Motor neuron (in vitro differentiated cells): ENCODE measurements at regions of chr11 and their contacts with region 1.

Region 1: GRCh38 chr11:66694732-66695207 is 17.1 kb upstream of the RBM4B start:
- ATAC-seq: peak; percentile 94 to 99 (median 98)
- H3K4me3 ChIP-seq: no peak overlapping the region
- H3K27ac ChIP-seq: no peak overlapping the region
- H3K4me1 ChIP-seq: no peaks in the 10 kb centered on the region

Region 2: GRCh38 chr11:66835768-66836405 is 141.1 kb after region 1 on chr11:
- in situ Hi-C with region 1: loop called in 4 of 9 experiments (anchors 5 to 10 kb)
- ATAC-seq: peak in 2 of 8 experiments; percentile 28 to 59
- H3K4me3 ChIP-seq: no peak overlapping the region
- H3K27ac ChIP-seq: no peak overlapping the region
- H3K4me1 ChIP-seq: no peaks in the 10 kb centered on the region